ENCODE measurements at regions of chr6 and their contacts with region 1.

Region 1: GRCh38 chr6:1335367-1336037 is 23.6 kb downstream of the FOXQ1 start:
- DNase-seq: no peak
- H3K4me3 ChIP-seq: no peak overlapping the region
- H3K27ac ChIP-seq: no peak overlapping the region
- H3K4me1 ChIP-seq: peaks cover 0 to 5% (median 3%) of the 10 kb centered on the region in 4 experiments; a peak in 3 of 7 replicates
- H3K27me3 ChIP-seq: peaks cover 0 to 4% (median 2%) of the 10 kb centered on the region in 4 experiments; a peak in 4 of 7 replicates
- CTCF ChIP-seq: no peak
- EP300 ChIP-seq: no peak
- POLR2A ChIP-seq: no peak
- RAD21 ChIP-seq: no peak

Region 2: DNA sequence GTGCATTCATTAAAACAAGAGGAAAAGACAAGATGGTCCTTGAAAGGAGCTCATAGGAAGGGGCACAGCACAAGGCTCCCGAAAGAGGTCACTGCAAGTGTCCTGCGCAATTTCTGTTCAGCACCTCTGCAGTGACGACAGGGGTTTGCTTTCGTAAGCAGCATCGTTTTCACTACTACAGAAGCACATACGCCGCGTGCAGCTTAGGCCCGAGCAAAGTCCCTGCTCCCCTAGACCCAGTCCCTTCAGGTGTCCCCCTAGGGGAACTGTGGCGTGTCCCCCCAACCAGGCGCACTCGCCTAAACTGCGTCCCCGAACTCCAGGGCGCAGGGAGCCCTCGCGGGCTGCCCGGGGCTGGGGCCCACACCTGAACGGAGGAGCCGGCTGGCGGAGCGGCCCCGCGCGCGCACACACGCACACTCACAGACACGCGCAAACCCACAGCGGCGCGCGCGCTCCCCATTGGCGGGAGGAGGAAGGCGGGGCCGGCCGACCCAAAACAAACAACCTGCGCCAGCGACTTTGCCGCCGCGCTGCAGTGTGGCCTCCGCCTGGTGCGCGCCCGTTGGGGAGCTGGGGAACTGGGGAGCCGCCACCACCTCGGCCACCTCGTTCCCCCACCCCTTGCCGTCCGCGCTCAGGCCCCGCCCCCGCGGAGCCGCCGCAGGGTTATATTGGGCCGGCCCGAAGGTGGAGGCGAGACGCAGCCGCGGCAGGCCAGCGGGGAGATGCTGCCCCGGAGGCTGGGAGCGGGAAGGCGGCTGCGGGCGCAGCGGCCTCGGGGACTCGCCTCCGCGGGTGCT is 23.9 kb before region 1 on chr6 and contains the start of gene FOXQ1:
- CTCF ChIA-PET with region 1: interaction called, 10 read pairs
- POLR2A ChIA-PET with region 1: no interaction called
- DNase-seq: peak in 1 of 2 experiments; percentile 81
- H3K4me3 ChIP-seq: peak within 1 kb of the TSS; percentile 36 to 61 (median 44)
- H3K27ac ChIP-seq: no peak within 1 kb of the TSS
- H3K4me1 ChIP-seq: peaks cover 0 to 20% (median 5%) of the 10 kb centered on the region in 4 experiments; a peak in 5 of 7 replicates
- H3K27me3 ChIP-seq: peaks cover 76 to 90% (median 86%) of the 10 kb centered on the region in 4 experiments
- CTCF ChIP-seq: no peak
- EP300 ChIP-seq: no peak
- POLR2A ChIP-seq: no peak
- RAD21 ChIP-seq: 0 out of 4 replicates have a peak, but pooled peaks of 1 of the 2 experiments have one; percentile 5
- total RNA-seq, gene FOXQ1: not detected in 2 replicates